HEK293T (cell line): ENCODE measurements at regions of chr13 and their contacts with region 1.

Region 1: DNA sequence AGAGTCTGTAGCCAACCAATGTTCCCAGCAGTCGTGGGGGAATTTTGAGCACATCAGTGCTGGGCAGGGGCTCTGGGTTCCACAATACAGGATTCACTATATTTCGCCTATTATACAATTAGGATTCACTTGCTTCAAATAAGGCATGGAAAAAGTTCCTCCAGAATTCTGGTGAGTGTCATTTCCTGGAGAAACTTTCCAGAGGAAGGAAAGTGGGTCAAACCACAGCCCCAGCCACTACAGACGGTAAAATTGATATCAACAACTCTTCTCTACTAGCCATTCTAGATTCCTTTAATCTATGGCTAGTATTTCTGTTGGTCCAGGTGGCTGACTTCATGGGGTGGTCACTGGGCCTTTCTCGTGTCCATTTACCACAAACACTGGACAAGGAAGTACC is 10.5 kb downstream of the MYCBP2 start:
- DNase-seq: no peak

Region 2: DNA sequence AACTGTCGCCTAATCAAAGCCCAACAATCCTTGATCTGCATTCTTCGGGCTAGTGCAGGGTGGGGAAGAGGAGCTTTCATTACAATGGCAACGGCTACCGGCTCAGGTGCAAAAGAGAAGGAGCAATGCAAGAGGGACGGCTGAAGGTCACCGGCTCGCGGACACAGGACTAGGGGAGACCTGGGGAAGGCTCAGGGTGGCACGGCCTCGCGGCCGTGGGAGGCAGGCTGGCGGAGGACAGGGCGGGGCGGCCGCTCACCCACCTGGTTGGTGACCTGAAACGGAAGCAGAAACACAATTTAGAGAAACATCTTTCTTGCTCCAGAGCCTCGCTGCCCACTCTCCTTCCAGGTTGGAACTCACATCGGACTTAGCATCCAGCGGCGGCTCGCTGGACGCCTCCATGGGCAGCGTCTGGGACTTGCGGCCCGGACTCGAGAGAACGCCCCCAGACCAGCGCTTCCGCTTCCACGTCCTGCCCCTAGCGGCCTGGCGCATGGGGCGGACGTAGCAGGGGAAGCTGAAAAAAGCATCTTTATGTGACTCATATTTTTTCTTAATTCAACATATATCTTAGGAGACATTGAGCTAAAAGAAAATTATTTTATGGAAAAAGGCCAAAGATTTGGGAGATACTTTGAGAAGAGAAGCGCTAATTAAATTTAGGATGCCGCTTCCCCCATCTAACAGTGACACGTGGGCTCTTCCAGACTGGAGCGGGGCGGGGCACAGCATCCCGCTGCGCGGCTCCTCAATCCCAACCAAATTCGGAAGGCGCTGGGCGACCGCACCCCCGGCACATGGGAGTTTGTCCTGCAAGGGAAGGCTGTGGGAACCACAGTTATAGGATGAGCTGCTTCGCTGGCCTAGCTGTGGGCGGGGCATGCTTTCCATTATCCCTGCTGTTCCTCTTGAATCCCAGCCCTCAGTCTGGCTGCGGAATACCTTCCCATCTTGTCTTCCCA is 1778.7 kb before region 1 on chr13 and contains the start of gene COMMD6:
- CTCF ChIA-PET with region 1: interaction called, 13 read pairs
- POLR2A ChIA-PET with region 1: no interaction called
- DNase-seq: peak; percentile 97

Region 3: DNA sequence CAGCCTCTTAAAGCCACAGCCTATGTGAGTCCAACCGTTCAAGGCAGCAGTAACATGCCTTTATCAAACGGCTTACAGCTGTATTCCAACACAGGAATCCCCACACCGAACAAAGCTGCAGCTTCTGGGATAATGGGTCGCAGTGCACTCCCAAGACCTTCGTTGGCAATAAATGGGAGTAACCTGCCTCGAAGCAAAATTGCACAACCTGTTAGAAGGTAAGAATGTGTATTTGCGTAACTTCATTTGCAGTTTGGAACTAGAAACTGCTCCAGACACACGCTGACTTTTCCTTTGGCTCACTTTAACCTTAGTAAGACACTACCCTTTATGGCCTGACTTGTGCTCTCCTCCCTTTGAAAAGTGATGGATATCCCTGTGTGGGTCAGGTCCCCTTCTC is 444.5 kb after region 1 on chr13:
- CTCF ChIA-PET with region 1: no interaction called
- POLR2A ChIA-PET with region 1: no interaction called
- DNase-seq: no peak